ENCODE measurements at regions of chr1 and their contacts with region 1.

Region 1: DNA sequence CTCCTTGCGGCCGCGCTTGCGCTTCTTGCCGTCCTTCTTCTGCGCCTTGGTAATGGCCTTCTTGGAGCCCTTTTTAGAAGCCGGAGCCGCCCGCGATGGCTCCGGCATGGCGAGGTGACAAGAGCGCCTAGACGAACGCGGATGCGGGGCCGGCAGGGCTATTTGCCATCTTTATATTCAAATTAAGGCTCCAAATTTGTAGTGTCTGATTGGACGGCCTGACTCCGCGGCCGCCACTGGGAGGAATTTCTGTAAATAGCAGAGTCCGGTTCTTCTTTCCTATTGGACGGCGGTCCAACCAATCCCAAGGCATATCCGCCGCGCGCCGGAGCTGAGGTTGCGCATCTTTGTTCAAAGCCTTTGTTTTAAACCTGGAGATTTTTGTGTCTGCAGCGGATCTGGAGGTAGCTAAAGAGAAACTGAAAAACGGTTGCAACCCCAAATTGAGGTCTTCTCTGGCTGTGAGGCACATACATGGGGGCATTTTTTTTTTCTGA is 22.6 kb upstream of the RNF187 start:
- DNase-seq: peak; percentile 87
- ATAC-seq: peak; percentile 84
- H3K4me3 Mint-ChIP-seq: peak overlapping the region; percentile 89
- H3K27ac Mint-ChIP-seq: peak overlapping the region; percentile 88
- H3K4me1 Mint-ChIP-seq: peaks cover 41% of the 10 kb centered on the region
- H3K27me3 Mint-ChIP-seq: peaks cover 66% of the 10 kb centered on the region
- CTCF ChIP-seq: no peak

Region 2: GRCh38 chr1:228486596-228487335 is 22.2 kb after region 1 on chr1:
- CTCF ChIA-PET with region 1: interaction called, 8 read pairs
- POLR2A ChIA-PET with region 1: interaction called, 11 read pairs
- DNase-seq: peak; percentile 92
- ATAC-seq: peak; percentile 91
- H3K4me3 Mint-ChIP-seq: peak overlapping the region; percentile 95
- H3K27ac Mint-ChIP-seq: peak overlapping the region; percentile 100
- H3K4me1 Mint-ChIP-seq: peaks cover 5% of the 10 kb centered on the region; the same call in 1 of the 2 replicates
- H3K27me3 Mint-ChIP-seq: no peaks in the 10 kb centered on the region; the same call in 1 of the 2 replicates
- CTCF ChIP-seq: no peak

Measured in WTC11 (cell line).